Activated naive CD8-positive, alpha-beta T cell treated with anti-CD3 and anti-CD28 coated beads, Interleukin-2, amount 10 ng/mL, durations not matched to agents 7 days and 5 days (primary cell): ENCODE measurements at regions of chr6 and their contacts with region 1.

Region 1: GRCh38 chr6:110039364-110039980 is 61.4 kb downstream of the GPR6 start:
- DNase-seq: peak; percentile 86
- ATAC-seq: peak; percentile 85
- H3K4me3 Mint-ChIP-seq: peak overlapping the region; percentile 92
- H3K27ac Mint-ChIP-seq: peak overlapping the region; percentile 94
- H3K4me1 Mint-ChIP-seq: peaks cover 25% of the 10 kb centered on the region
- H3K27me3 Mint-ChIP-seq: no peaks in the 10 kb centered on the region

Region 2: GRCh38 chr6:109705258-109705657 is 334.2 kb before region 1 on chr6:
- POLR2A ChIA-PET with region 1: interaction called, 19 read pairs
- DNase-seq: peak; percentile 75
- ATAC-seq: peak; percentile 97
- H3K4me3 Mint-ChIP-seq: no peak overlapping the region
- H3K27ac Mint-ChIP-seq: no peak overlapping the region
- H3K4me1 Mint-ChIP-seq: peaks cover 7% of the 10 kb centered on the region
- H3K27me3 Mint-ChIP-seq: no peaks in the 10 kb centered on the region

Region 3: GRCh38 chr6:109966299-109966698 is 73.2 kb before region 1 on chr6:
- POLR2A ChIA-PET with region 1: no interaction called
- DNase-seq: no peak
- ATAC-seq: no peak
- H3K4me3 Mint-ChIP-seq: no peak overlapping the region
- H3K27ac Mint-ChIP-seq: no peak overlapping the region
- H3K4me1 Mint-ChIP-seq: no peaks in the 10 kb centered on the region
- H3K27me3 Mint-ChIP-seq: peaks cover 2% of the 10 kb centered on the region

Region 4: GRCh38 chr6:110389689-110390382 is 350.4 kb after region 1 on chr6:
- POLR2A ChIA-PET with region 1: interaction called, 17 read pairs
- DNase-seq: no peak
- ATAC-seq: peak; percentile 26
- H3K4me3 Mint-ChIP-seq: peak overlapping the region; percentile 59
- H3K27ac Mint-ChIP-seq: peak overlapping the region; percentile 84
- H3K4me1 Mint-ChIP-seq: peaks cover 15% of the 10 kb centered on the region
- H3K27me3 Mint-ChIP-seq: no peaks in the 10 kb centered on the region